GM10248 (cell line): ENCODE measurements at regions of chr1 and their contacts with region 1.

Region 1: DNA sequence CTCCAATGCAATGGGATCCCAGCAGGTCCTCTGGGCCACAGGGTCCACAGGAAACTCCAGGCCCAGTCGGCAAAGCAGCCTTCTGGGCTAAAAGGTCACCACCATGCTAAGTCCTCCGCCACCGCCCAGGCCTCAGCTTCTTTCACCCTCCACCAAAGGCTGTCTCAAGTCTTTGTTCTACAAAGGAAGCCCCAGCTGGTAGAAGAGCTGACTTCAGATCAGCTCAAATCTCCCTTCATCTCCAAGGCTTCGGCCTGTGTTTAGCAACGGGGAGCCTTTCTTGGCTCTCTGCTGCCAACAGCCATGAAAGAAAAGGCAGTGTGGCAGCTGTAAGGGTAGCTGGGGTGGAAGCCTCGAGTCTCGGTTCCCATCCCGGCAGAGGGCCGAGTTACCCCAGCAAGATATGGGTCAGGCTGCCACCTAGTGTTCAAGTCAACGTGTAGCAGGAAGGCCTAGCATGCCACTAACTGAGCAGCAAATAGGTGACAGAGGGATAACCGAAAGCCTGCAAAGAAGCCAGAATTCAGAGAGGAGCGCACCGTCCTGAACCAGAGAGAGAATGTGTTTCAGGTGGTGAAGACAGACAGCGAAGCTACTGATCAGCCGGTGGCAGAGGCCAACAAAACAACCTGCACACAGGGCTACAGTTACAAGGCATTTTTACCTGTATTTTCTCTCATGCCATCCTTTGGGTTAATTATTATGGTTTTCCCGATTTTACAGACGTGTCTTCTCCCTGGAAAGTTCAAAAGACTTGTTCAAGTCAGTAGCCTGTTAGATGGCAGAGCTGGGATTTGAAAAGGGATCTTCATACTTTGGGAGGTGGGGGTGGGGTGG is 26.8 kb upstream of the CRNN start:
- DNase-seq: peak; percentile 85
- CTCF ChIP-seq: peak; percentile 85

Region 2: GRCh38 chr1:152252157-152252556 is 188.7 kb before region 1 on chr1:
- CTCF ChIA-PET with region 1: no interaction called
- POLR2A ChIA-PET with region 1: no interaction called
- DNase-seq: no peak
- CTCF ChIP-seq: no peak

Region 3: GRCh38 chr1:152398812-152399698 is 41.8 kb before region 1 on chr1:
- CTCF ChIA-PET with region 1: interaction called, 11 read pairs
- POLR2A ChIA-PET with region 1: no interaction called
- DNase-seq: peak; percentile 23
- CTCF ChIP-seq: peak; percentile 0